ENCODE measurements at regions of chr1 and their contacts with region 1.

Region 1: DNA sequence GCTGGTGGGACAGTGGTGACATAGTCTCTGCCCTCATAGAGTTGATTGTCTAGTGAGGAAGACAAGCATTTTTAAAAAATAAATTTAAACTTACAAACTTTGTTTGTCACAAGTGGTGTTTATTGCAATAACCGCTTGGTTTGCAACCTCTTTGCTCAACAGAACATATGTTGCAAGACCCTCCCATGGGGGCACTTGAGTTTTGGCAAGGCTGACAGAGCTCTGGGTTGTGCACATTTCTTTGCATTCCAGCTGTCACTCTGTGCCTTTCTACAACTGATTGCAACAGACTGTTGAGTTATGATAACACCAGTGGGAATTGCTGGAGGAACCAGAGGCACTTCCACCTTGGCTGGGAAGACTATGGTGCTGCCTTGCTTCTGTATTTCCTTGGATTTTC is 58.4 kb downstream of the LAMC2 start:
- DNase-seq: no peak
- H3K4me3 ChIP-seq: no peak overlapping the region
- H3K27ac ChIP-seq: no peak overlapping the region
- H3K4me1 ChIP-seq: peaks cover 15% of the 10 kb centered on the region
- H3K27me3 ChIP-seq: no peaks in the 10 kb centered on the region
- CTCF ChIP-seq: no peak

Region 2: DNA sequence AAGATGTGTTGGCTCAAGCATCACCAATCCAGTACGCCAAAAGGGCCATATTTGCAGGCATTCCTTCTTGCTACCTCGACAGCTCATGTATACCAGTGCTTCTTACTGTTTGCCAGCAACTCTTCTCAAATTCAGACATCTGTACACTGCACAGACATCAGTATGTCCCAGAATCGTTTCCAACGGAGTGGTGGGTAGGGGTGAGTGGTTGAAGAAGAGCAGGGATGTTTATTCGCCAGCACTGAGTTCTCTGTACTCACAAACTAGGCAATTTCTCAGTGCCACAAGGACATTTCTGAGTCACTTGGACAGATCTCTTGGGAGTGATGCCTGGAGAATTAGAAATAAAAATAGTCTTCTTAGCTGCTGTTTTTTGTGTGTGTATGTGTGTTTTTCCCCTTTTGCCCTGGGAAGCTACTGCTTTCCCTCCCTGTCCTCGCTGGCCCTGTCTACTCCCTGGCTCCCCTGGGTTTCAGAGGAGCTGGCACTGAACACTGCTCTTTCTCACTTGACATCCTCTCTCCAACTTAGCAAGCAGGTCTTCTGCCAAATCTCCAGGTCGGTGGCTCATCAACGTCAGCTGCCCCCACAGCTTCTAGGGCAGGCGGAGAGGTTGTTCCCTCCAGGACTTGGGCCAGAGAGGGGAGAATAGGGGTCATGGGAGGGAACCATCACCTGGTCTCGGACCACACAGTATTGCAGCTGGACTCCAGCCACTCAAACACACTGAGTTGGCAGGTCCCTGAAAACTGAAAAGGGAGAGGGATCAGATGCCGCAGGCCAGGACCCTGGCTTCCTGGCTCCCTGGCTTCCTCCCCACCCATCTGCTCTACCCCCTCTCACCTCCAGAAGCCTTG is 83.2 kb after region 1 on chr1:
- CTCF ChIA-PET with region 1: no interaction called
- dilution Hi-C with region 1: loop called (anchors 5 kb)
- in situ Hi-C with region 1: no loop called
- intact Hi-C with region 1: no loop called
- DNase-seq: no peak
- H3K4me3 ChIP-seq: no peak overlapping the region
- H3K27ac ChIP-seq: no peak overlapping the region
- H3K4me1 ChIP-seq: no peaks in the 10 kb centered on the region
- H3K27me3 ChIP-seq: no peaks in the 10 kb centered on the region
- CTCF ChIP-seq: no peak

Measured in mammary epithelial cell (primary cell).